Left cardiac atrium (tissue), 4 donors: ENCODE measurements at regions of chr9 and their contacts with region 1.

Region 1: DNA sequence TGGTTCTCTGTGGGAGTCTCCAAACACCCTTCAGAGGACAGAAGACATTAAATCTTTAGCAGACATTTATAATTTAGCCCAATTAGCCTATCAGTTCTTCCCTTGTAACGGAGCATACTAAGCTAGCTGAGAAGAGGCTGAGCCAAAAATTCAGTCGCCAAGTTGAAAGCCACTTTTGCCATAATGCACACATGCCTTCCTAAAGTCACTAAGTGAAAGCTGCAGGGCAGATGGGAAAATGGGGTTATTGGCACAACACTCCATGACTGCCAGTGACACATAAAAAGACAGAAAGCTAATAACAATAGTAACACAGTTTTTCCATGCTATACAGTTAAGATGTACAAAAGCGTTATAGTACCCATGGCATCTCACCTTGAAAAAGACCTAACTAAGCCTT is 176.2 kb downstream of the DIRAS2 start:
- DNase-seq: no peak
- ATAC-seq: no peak

Region 2: GRCh38 chr9:90526386-90526785 is 59.9 kb after region 1 on chr9:
- intact Hi-C with region 1: loop called in 1 of 2 experiments (anchors 2 kb)
- DNase-seq: no peak
- ATAC-seq: no peak

Region 3: DNA sequence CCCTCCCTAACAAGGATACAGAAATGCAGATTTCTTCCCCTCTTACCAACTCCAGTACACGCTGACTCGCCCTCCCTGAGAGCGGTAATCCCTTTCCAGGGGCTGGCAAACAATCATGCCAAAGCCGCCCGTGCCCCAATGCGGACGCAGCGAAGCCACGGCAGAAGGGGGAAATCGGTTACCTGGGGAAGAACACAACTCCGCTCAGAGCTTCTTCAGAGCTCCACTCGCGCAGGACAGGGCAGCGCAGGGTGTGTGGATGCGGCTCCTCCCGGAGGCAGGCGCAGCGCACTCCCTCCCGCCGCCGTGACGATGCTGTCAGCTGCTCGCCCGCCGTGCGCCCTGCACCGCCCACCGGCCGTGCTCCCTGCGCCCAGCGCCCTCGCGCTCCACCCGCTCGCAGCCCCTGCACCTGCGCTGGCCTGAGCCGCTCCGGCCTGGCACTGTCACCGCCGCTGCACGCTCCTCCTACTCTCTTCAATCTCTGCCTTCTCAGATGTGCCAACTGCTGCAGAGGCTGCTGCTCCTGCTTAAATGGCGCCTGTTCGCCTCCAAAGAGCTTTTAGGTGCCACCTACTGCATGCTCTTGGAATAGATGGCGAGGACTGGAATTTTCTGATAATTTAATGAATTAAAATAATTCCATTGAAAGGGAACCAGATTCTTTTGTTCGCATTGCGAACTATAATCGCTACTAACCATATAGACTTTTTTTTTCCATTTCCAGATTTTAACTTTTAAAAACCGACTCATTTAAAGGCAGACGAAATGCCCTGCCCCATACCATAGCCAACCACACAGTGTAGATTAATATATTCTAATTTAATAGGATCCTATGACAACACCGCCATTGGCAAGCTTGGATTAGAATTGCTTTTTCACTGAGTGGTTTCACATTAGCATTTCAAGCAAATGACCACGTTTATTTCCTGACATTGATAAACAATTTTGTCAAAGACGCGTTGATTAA is 176.4 kb after region 1 on chr9 and contains the start of gene DIRAS2:
- intact Hi-C with region 1: no loop called
- DNase-seq: peak; percentile 33
- ATAC-seq: peak; percentile 84 to 99
- total RNA-seq, gene DIRAS2: not detected